HAP-1 (cell line): ENCODE measurements at regions of chr12 and their contacts with region 1.

Region 1: DNA sequence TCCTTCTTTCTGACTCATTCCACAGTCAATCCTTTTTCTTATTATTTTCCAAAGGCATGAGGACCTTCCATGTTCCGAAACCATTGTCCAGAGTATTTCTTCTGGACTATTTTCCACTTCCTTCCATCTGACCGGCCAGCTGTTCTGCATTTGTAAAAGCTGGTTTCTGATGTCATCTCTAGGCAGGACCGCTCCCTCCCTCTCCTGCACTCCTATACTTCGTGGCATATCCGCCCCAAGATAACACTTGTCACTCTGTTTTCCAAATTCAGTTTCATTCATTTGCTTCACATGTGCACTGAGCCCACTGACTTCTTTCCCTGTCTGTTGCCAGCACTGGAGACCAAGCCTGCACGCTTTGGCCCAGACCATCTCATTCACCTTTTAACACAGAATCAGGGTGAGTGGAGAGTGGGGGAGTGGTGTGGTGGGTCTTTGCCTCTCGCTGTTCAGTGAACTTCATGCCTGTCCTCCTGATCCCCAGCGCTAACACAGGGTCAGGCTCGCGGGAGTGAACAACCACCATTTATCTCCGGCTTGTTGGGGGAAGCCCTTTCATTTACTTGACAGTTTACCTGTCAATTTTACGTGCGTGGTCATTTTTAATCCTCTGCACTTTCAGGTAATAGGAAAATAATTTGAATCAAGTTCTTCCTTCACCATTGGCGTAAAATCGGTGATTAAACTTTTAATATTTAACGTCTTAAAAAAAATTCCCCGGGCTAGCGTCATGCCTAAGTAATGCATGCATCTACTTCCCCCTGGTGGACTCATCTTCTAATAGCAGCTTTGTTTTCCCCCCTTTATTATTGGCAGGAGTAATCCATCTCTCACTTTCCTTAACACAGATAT is 52.5 kb downstream of the C12orf75 start:
- DNase-seq: peak; percentile 62 to 77
- H3K4me3 ChIP-seq: peak overlapping the region; percentile 4
- H3K4me1 ChIP-seq: peaks cover 8% of the 10 kb centered on the region
- H3K27me3 ChIP-seq: no peaks in the 10 kb centered on the region

Region 2: DNA sequence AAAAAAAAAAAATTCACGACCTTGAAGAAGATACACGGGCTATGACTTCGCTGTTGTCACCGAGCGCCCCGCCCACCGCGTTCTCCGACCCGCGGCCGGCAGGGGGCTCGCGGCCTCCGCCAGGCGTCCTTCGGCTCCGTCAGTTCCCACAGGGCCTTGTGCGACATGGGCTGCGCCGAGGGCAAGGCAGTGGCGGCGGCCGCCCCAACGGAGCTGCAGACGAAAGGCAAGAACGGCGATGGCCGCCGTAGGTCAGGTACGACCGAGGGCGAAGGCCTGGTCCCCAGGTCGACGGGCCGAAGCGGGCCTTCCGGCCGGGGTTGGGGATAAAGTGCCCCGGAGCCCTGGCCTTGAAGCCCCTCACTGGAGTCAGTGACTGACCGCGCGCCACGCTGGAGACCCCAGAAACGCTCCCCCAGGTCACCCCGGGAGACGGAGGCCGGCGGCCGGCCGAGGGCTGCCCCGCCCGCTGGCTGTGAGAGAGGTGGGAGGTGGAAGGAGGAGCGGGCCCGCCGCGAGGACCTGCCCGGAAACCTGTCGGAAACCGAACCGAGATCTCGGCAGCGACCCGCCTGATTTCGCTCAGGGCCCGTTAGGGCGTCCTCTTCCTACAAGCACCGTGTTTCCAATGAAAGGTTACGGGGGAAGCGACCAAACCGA is 1167.2 kb before region 1 on chr12 and contains the start of gene TXNRD1:
- in situ Hi-C with region 1: loop called (anchors 25 kb)
- DNase-seq: peak; percentile 81 to 91
- H3K4me3 ChIP-seq: peak within 1 kb of the TSS; percentile 44
- H3K4me1 ChIP-seq: peaks cover 21% of the 10 kb centered on the region
- H3K27me3 ChIP-seq: no peaks in the 10 kb centered on the region

Region 3: GRCh38 chr12:104381731-104382480 is 1001.1 kb before region 1 on chr12:
- in situ Hi-C with region 1: loop called (anchors 25 kb)
- DNase-seq: peak; percentile 64 to 87
- H3K4me3 ChIP-seq: no peak overlapping the region
- H3K4me1 ChIP-seq: no peaks in the 10 kb centered on the region
- H3K27me3 ChIP-seq: no peaks in the 10 kb centered on the region

Region 4: DNA sequence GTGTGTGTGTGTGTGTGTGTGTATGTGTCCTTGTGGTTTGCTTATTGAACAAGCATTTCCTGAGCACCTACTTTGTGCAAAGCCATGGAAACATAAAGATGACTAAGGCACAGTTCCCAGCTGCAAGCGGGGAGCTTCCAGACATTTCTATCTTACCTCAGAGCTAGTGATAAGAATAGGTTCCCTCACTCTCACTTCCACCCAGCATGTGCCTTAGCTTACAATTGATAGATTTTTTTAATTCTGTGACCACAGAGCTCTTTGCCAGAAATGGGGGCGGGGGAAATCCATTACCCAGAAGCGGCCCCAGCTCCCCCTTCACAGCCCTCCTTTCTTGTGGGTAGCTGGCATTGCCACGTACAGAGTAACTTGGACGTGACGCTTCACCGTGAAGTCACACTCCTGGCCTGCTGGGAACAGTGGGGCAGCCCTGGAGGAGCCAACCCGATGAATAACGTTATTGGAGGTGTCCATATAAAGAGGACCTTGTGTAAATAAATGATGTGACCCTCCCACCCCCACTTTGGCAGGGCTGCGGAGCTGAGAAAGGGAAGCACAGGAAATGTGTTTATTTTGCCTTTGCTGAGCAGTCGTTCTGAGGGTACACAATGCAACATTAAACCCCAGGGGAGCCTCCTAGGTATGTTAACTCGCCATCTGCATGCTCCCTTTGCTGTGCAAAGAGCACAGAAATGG is 687.4 kb before region 1 on chr12:
- in situ Hi-C with region 1: loop called (anchors 25 kb)
- DNase-seq: no peak
- H3K4me3 ChIP-seq: no peak overlapping the region
- H3K4me1 ChIP-seq: no peaks in the 10 kb centered on the region
- H3K27me3 ChIP-seq: no peaks in the 10 kb centered on the region

Region 5: DNA sequence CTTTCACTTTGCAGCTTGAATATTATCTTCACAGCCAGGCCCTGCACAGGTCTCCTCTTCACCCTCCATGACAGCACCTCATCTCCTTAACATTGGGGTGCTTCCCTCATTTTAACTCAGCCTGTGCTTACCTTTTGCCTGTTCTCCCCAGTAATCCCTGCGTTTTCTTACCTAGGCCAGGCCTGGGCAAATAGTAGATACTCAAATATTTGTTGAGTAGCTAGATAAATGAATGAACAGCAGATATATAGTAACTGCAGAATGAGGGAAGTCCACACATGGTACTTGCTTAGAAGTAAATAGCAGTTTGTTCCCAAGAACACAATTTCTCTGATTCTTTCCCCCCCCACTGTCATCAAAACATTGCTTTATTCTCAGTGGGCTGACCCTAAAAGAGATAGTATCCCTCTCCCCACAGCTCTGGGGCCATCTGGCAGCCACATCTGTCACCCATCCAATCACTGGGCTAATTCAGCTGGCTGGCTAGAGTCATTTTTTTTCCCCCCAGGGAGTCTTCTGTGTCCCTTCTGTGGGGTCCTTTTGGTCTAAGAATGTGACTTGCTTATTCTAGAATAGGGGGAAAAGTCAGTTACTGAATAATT is 190.3 kb before region 1 on chr12:
- in situ Hi-C with region 1: loop called (anchors 25 kb)
- DNase-seq: no peak
- H3K4me3 ChIP-seq: no peak overlapping the region
- H3K4me1 ChIP-seq: no peaks in the 10 kb centered on the region
- H3K27me3 ChIP-seq: no peaks in the 10 kb centered on the region